ENCODE measurements at regions of chr10 and their contacts with region 1.

Region 1: DNA sequence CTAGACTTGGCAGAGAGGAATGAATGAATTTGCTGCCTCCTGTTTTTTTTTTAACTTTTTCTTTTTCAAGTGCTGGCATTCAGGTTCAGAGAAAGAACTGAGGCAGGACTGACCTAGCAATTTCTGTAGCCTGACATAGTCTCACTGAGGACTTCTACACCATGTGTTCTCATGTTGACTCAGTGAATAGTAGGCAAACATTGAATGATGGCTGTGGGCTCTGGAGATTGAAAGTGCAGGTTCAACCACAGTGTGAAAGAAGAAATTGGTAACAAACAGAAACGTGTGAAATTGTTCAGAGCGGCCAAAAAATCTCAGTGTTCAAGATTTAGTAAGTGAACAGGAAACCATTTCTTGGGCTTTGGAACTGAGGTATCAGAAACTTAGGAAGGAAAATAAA is 322.4 kb upstream of the GHITM start:
- DNase-seq: no peak

Region 2: GRCh38 chr10:83760142-83760541 is 56.8 kb before region 1 on chr10:
- intact Hi-C with region 1: no loop called
- DNase-seq: no peak

Region 3: DNA sequence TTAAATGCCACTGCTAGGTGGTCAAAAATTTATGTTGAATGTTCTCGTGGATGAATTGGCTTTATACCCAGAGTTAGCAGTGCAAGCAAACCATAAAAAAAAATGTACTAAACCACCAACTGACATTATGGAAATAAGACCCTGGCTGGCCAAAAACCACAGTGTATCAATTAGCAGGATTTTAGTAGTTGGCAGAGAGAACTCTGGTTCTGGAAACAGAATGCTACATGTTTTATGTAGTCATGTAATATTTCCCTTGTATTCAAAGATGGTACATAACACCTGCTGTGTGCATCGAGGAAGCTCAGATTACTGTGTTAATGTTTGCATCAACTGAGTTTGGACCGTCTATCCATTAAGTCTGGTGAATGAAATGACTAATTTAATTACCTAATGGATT is 1130.0 kb after region 1 on chr10:
- intact Hi-C with region 1: loop called in 1 of 2 experiments (anchors 10 kb)
- DNase-seq: no peak

Measured in posterior vena cava (tissue), 2 donors.